ENCODE measurements at regions of chr3 and their contacts with region 1.

Region 1: DNA sequence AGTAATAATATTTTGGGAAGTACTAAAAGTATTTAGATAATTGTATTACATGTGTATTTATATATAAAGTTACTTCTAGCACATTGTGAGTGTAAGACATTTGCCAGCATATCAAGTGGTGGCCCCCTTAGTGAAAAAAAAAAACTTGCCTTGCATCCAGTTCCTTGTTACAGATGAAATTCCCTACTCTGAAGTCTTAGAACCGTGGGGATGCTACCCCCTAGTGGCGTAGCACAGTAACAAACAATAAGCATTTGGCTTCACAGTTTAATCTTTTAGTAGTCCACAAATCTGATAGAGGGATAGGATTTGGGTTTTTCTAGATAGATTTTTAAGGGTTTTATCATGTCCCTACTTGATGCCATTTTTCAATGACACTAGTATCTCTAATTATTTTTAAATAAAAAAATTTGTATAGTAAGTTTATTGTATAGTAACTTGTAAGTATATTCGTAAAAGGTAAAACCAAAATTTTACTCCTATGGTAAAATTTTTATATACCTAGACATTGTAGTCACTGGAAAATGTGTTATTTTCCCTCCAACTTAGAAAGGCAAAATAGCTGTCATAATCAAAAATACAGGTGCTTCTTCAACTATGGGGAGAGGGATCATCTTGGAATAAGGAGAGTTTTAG is 14.3 kb downstream of the SMC4 start:
- DNase-seq: peak; percentile 11 to 67
- ATAC-seq: peak in 6 of 8 donors; percentile 11 to 74 (median 63)
- H3K4me3 ChIP-seq: no peak overlapping the region
- H3K27ac ChIP-seq: no peak overlapping the region
- H3K4me1 ChIP-seq: no peaks in the 10 kb centered on the region
- H3K27me3 ChIP-seq: no peaks in the 10 kb centered on the region
- CTCF ChIP-seq: peak; percentile 71 to 95 (median 90)

Region 2: GRCh38 chr3:160027541-160028195 is 386.1 kb before region 1 on chr3:
- intact Hi-C with region 1: loop called in 9 of 10 experiments (anchors 2 to 10 kb)
- DNase-seq: no peak
- ATAC-seq: no peak
- H3K4me3 ChIP-seq: no peak overlapping the region
- H3K27ac ChIP-seq: no peak overlapping the region
- H3K4me1 ChIP-seq: peaks cover 0 to 11% (median 0%) of the 10 kb centered on the region in 9 donors
- H3K27me3 ChIP-seq: peaks cover 0 to 2% (median 0%) of the 10 kb centered on the region in 7 donors
- CTCF ChIP-seq: no peak

Region 3: DNA sequence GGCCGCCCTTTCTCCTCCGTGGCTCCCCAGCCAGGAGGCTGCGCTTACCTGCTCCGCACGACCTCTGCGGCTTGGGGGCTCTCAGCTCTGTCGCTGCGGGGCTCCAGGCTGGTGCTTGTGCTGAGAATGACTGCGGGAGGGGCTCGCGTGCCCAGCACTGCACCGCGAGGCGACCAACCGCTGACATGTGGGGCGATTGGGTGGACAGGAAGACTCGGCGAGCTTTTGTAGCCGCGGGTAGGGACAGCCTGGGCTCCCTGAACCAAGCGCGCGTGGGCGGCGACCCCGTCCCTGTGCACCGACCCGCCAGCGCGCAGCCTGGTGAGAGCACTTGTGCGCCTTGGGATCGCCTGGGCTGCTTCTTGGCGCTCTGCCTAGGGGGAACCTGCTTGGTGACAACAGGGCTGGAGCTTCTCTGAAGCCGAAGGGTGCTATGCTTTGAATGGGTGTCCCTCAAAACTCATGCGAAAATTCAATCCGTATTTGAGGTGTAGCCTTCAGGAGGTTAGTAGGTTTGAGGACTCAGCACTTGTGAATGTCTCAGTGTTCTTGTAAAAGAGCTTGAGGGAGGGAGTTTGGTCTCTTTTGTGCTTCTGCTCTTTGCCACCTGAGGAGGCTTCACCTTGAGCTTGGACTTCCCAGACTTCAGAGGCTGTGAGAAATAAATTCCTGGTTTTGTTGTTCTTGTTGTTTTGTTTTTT is 374.7 kb before region 1 on chr3:
- intact Hi-C with region 1: loop called in 7 of 10 experiments (anchors 5 to 10 kb)
- DNase-seq: peak in 1 of 2 donors; percentile 15
- ATAC-seq: peak; percentile 25 to 57 (median 40)
- H3K4me3 ChIP-seq: peak overlapping the region in 9 of 10 donors; percentile 11 to 48 (median 46)
- H3K27ac ChIP-seq: no peak overlapping the region
- H3K4me1 ChIP-seq: peaks cover 0 to 8% (median 3%) of the 10 kb centered on the region in 9 donors
- H3K27me3 ChIP-seq: peaks cover 0 to 48% (median 37%) of the 10 kb centered on the region in 7 donors
- CTCF ChIP-seq: no peak

Region 4: DNA sequence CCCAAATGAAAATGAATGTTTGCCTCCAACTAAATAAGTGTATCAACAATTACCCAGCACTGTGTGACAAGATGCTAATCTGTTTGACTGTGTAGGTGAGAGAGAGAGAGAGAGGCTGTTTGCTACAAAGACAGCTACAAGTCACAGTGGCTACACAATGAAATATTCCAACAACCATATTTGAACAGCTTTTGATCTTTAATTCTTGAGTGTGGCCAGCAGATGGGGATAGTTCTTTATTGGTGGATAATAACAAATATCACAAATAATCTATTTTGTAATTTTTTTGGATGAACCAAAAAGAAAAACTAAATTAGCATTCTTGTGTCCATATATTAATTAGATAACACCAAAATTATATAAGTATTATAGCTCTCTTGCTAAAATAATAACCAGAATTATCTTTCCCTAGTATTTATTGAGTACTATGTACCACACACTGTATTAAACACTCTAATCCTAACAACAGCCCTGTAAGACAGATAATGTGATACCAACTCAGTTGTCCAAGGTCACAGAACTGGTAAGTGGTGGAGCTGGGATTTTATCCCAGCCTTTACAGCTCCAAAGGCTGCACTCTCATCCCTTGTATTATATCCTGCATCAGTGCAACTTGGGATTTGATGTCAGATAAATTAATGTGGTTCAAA is 250.4 kb before region 1 on chr3:
- intact Hi-C with region 1: loop called in 8 of 10 experiments (anchors 2 to 10 kb)
- DNase-seq: no peak
- ATAC-seq: no peak
- H3K4me3 ChIP-seq: no peak overlapping the region
- H3K27ac ChIP-seq: no peak overlapping the region
- H3K4me1 ChIP-seq: no peaks in the 10 kb centered on the region
- H3K27me3 ChIP-seq: peaks cover 0 to 15% (median 0%) of the 10 kb centered on the region in 7 donors
- CTCF ChIP-seq: peak in 8 of 9 donors; percentile 16 to 68 (median 52)

Region 5: DNA sequence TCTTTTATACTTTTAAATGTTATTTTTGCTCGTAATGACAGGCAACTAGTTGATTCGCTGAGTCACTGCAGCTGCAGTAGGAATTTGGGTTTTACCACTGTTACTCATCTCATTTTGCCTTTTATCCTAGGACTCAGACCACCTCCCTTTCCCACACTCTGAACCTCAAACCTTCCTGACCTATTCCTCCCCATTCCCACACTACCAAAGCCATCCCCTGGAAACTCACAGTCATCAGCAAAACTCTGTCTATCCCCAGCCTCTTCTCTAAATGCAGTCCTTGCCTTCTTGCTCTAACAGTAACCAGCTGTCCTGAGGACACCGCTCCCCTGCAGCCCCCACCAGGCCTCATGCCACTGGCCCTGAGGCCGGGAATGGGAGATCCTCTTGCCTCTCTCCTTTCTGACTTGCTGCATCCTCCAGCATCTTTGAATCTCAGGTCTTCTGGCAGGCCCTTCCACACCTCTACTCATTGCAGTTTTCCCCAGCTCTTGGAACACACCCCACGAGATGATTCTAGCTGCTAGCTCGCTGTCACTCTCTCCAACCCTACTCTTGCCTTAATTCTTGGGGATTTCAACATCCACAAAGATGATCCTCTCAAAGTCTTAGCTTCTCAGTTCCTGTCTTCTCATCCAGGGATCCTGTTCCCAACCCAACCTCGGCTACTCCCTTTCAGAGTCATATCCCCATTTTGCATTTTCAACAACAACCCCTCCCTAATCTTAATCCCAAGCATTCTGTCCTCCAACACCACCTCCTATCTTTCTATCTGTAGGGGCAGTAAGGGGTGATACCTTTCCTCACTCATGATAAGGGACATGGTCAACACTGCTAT is 244.4 kb before region 1 on chr3:
- intact Hi-C with region 1: loop called in 6 of 10 experiments (anchors 5 to 10 kb)
- DNase-seq: no peak
- ATAC-seq: no peak
- H3K4me3 ChIP-seq: no peak overlapping the region
- H3K27ac ChIP-seq: peak overlapping the region in 1 of 10 donors; percentile 60
- H3K4me1 ChIP-seq: peaks cover 0 to 8% (median 0%) of the 10 kb centered on the region in 9 donors
- H3K27me3 ChIP-seq: no peaks in the 10 kb centered on the region
- CTCF ChIP-seq: no peak

Region 6: DNA sequence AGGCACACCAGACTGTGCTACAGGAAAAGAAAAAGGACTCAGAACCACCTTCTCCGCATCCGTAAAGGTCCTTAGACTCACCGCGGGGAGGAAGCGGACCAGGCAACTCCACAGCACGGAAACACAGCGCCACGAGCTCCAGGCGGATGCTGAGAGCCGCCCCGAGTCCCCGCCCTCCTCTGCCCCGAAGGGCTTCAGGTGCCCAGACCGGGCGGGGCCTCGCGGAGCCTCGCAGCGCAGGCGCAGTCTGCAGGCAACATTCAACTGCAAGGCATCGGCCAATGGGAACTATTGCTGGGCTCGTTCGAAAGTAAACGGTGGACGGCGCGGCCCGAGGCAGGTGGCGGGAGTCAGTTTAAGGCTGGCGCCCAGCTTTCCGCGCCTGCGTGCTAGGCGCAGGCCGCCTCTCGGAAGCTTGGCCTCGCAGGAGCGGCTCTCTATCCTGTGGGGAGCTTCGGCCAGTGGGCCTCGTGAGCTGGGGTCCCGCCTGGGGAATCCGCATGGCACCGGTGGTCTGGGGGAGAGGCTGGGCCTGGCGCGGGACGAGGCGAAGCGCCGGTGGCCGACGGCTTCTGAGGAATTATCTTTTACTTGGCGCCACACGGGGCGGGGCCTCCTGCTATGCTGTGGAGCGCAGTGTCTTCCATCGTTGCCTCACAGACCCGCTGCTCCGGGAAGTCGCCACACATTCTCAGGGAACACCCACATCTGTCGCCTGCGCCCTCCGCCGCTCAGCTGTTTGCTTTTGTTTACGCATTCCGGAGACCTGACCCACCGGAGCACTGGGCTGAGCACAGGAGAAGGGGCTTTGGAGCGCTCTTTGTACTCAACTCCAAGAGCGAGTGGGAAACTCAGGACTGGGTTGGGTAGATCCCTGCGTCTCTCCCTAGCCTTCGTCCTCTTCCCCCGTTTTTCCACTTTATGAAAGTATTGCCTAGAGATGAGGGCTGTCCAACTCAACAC is 36.2 kb after region 1 on chr3 and contains the start of gene TRIM59:
- intact Hi-C with region 1: no loop called
- DNase-seq: peak; percentile 57 to 78
- ATAC-seq: peak; percentile 77 to 94 (median 90)
- H3K4me3 ChIP-seq: peak within 1 kb of the TSS; percentile 23 to 68 (median 49)
- H3K27ac ChIP-seq: peak within 1 kb of the TSS in 1 of 10 donors; percentile 84
- H3K4me1 ChIP-seq: peaks cover 0 to 31% (median 15%) of the 10 kb centered on the region in 9 donors
- H3K27me3 ChIP-seq: peaks cover 0 to 30% (median 16%) of the 10 kb centered on the region in 7 donors
- CTCF ChIP-seq: no peak
- total RNA-seq, gene TRIM59: 0.10 to 2.8 (median 0.60) TPM in 9 of 10 donors, not detected in the other